Posterior cingulate gyrus (tissue), 11 donors: ENCODE measurements at regions of chr20 and their contacts with region 1.

Region 1: GRCh38 chr20:7859356-7859802 is 80.9 kb downstream of the HAO1 start:
- DNase-seq: peak in 2 of 10 donors; percentile 33 to 36

Region 2: GRCh38 chr20:6142348-6142993 is 1716.9 kb before region 1 on chr20:
- intact Hi-C with region 1: loop called (anchors 10 kb)
- DNase-seq: peak in 5 of 10 donors; percentile 34 to 55 (median 49)

Region 3: DNA sequence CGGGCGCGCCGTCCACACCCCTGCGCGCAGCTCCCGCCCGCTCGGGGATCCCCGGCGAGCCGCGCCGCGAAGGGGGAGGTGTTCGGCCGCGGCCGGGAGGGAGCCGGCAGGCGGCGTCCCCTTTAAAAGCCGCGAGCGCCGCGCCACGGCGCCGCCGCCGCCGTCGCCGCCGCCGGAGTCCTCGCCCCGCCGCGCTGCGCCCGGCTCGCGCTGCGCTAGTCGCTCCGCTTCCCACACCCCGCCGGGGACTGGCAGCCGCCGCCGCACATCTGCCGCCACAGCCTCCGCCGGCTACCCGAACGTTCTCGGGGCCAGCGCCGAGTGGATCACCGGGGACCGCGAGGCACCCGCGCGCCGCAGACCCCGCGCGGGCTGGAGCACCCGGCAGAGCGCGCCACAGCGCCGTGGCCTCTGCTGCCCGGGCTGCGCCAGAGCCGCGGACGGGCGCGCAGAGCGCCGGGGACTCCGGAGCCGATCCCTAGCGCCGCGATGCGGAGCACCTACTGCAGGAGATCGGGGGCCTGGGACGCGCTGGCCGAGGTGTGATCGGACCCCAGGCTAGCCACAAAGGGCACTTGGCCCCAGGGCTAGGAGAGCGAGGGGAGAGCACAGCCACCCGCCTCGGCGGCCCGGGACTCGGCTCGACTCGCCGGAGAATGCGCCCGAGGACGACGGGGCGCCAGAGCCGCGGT is 1091.7 kb before region 1 on chr20 and contains the start of gene BMP2:
- intact Hi-C with region 1: loop called (anchors 5 kb)
- DNase-seq: peak; percentile 32 to 92 (median 42)

Region 4: GRCh38 chr20:6828794-6829423 is 1030.5 kb before region 1 on chr20:
- intact Hi-C with region 1: loop called (anchors 2 kb)
- DNase-seq: peak in 7 of 10 donors; percentile 43 to 84 (median 66)